ENCODE measurements at regions of chr2 and their contacts with region 1.

Region 1: GRCh38 chr2:1591978-1592907 is 152.1 kb downstream of the PXDN start:
- DNase-seq: peak; percentile 13
- H3K4me3 ChIP-seq: no peak overlapping the region
- H3K27ac ChIP-seq: no peak overlapping the region
- H3K4me1 ChIP-seq: no peaks in the 10 kb centered on the region
- CTCF ChIP-seq: peak; percentile 33; the same call in 1 of the 2 replicates

Region 2: DNA sequence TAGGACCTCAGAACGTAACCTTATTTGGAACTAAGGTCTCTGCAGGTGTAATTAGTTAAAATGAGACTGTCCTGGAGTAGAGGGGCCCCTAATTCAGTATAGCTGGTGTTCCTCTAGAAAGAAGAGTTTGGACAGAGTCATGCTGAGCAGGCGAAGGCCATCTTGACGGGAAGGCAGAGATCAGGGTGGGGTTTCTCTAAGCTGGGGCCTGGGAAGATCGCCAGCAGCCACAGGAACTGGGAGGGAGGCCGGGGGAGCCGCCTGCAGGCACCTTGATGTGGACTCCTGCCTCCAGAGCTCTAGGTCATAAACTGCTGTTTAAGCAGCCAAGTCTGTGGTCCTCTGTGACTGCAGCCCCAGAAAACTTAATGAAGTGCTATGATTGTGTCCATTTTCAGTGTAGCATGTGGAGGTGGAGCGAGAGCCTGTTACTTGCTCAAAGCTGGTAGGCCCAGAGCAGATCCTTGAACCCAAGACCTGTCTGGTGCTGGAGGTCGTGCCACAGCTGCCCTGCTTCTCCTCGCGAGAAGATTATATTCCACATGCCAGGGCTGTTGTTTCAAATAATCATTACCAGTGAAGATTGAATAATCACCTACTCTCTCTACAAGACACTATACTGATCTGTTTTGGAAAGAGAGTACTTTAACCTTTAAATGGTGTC is 73.2 kb before region 1 on chr2:
- CTCF ChIA-PET with region 1: no interaction called
- POLR2A ChIA-PET with region 1: no interaction called
- intact Hi-C with region 1: no loop called
- DNase-seq: no peak
- H3K4me3 ChIP-seq: no peak overlapping the region
- H3K27ac ChIP-seq: no peak overlapping the region
- H3K4me1 ChIP-seq: no peaks in the 10 kb centered on the region
- CTCF ChIP-seq: no peak

Region 3: GRCh38 chr2:1642066-1642861 is 50.0 kb after region 1 on chr2:
- CTCF ChIA-PET with region 1: no interaction called
- POLR2A ChIA-PET with region 1: no interaction called
- intact Hi-C with region 1: loop called (anchors 2 kb)
- DNase-seq: no peak
- H3K4me3 ChIP-seq: no peak overlapping the region
- H3K27ac ChIP-seq: no peak overlapping the region
- H3K4me1 ChIP-seq: no peaks in the 10 kb centered on the region
- CTCF ChIP-seq: no peak

Region 4: DNA sequence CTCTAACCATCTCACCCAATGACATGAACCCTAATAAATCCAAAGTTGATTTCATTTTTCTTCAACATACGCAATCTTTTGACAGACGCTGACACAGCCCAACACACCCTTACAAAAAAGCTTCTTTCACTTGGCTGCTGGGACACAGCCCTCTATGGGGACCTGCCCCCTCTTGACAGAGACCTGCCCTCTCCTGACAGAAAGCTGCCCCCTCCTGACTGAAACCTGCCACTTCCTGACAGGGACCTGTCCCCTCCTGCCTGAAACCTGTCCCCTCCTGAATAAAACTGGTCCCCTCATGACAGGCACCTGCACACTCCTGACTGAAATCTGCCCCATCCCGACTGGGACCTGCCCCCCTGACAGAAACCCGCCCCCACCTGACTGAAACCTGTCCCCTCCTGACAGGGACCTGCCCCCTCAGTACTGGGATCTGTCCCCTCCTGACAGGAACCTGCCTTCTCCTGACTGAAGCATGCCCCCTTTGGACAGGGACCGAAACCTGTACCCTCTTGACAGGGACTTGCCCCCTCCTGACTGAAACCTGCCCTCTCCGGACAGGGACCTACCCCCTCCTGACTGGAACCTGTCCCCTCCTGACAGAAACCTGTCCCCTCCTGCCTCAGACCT is 64.2 kb after region 1 on chr2:
- CTCF ChIA-PET with region 1: no interaction called
- POLR2A ChIA-PET with region 1: no interaction called
- intact Hi-C with region 1: loop called (anchors 5 kb)
- DNase-seq: peak; percentile 11
- H3K4me3 ChIP-seq: no peak overlapping the region
- H3K27ac ChIP-seq: no peak overlapping the region
- H3K4me1 ChIP-seq: no peaks in the 10 kb centered on the region
- CTCF ChIP-seq: no peak

Region 5: DNA sequence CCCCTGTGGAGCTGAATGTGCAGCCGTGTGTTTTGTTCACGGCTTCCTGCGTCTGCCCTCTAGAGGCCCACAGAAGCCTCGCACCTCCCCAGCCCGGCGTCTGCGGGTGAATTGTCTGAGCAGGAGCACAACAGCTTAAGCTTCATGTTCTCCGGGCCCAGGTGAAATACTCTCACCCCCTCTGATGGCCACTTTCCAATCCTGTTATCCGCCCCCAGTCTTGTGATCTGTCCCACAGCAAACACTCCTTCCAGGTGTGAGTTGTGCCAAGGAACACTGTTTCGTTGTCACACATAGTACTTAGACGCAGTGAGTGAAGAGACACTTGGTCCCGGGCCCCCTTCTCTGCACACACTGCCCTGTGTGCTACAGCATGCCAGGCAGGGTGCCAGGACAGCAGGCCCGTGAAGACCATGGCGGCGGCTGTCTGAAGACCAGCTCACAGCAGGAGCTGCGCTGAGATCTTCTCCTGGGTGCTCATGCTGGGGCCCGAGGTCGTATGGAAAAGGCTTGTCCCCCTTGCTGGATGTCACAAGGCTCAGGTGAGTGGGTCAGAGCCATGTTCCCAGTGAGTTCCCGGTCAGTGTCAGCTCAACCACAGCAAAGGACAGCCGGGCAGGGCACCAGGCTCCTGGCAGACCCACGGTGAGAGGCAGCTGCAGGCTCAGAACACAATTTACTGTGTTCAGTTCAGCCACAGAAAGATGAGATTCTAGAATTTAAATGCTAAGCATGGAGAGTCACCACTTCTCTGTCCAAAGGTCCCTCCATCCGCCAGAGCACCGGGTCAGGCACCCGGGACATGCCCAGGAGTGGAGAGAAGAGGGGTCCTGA is 158.9 kb after region 1 on chr2:
- CTCF ChIA-PET with region 1: no interaction called
- POLR2A ChIA-PET with region 1: no interaction called
- intact Hi-C with region 1: loop called (anchors 5 kb)
- DNase-seq: peak; percentile 16
- H3K4me3 ChIP-seq: no peak overlapping the region
- H3K27ac ChIP-seq: no peak overlapping the region
- H3K4me1 ChIP-seq: no peaks in the 10 kb centered on the region
- CTCF ChIP-seq: peak; percentile 65

Region 6: GRCh38 chr2:1769703-1770422 is 177.6 kb after region 1 on chr2:
- CTCF ChIA-PET with region 1: no interaction called
- POLR2A ChIA-PET with region 1: no interaction called
- intact Hi-C with region 1: loop called (anchors 1 kb)
- DNase-seq: peak; percentile 61
- H3K4me3 ChIP-seq: no peak overlapping the region
- H3K27ac ChIP-seq: no peak overlapping the region
- H3K4me1 ChIP-seq: no peaks in the 10 kb centered on the region
- CTCF ChIP-seq: peak; percentile 87